ENCODE measurements at regions of chr14 and their contacts with region 1.

Region 1: GRCh38 chr14:79809849-79810612 is 401.3 kb downstream of the DIO2 start:
- DNase-seq: peak; percentile 4 to 38
- H3K4me3 ChIP-seq: no peak overlapping the region
- H3K27ac ChIP-seq: no peak overlapping the region
- H3K4me1 ChIP-seq: no peaks in the 10 kb centered on the region
- H3K27me3 ChIP-seq: no peaks in the 10 kb centered on the region
- CTCF ChIP-seq: peak; percentile 54

Region 2: GRCh38 chr14:78933948-78934524 is 876.0 kb before region 1 on chr14:
- CTCF ChIA-PET with region 1: no interaction called
- POLR2A ChIA-PET with region 1: no interaction called
- intact Hi-C with region 1: no loop called
- DNase-seq: peak in 1 of 2 experiments; percentile 8
- H3K4me3 ChIP-seq: no peak overlapping the region
- H3K27ac ChIP-seq: no peak overlapping the region
- H3K4me1 ChIP-seq: no peaks in the 10 kb centered on the region
- H3K27me3 ChIP-seq: no peaks in the 10 kb centered on the region
- CTCF ChIP-seq: peak; percentile 85

Region 3: GRCh38 chr14:79552778-79553177 is 257.3 kb before region 1 on chr14:
- CTCF ChIA-PET with region 1: no interaction called
- POLR2A ChIA-PET with region 1: no interaction called
- intact Hi-C with region 1: no loop called
- DNase-seq: no peak
- H3K4me3 ChIP-seq: no peak overlapping the region
- H3K27ac ChIP-seq: no peak overlapping the region
- H3K4me1 ChIP-seq: no peaks in the 10 kb centered on the region
- H3K27me3 ChIP-seq: peaks cover 20% of the 10 kb centered on the region
- CTCF ChIP-seq: no peak

Region 4: GRCh38 chr14:79881299-79881698 is 71.3 kb after region 1 on chr14:
- CTCF ChIA-PET with region 1: interaction called, 11 read pairs
- POLR2A ChIA-PET with region 1: no interaction called
- intact Hi-C with region 1: no loop called
- DNase-seq: no peak
- H3K4me3 ChIP-seq: no peak overlapping the region
- H3K27ac ChIP-seq: no peak overlapping the region
- H3K4me1 ChIP-seq: no peaks in the 10 kb centered on the region
- H3K27me3 ChIP-seq: peaks cover 16% of the 10 kb centered on the region
- CTCF ChIP-seq: no peak

Region 5: GRCh38 chr14:80850197-80850814 is 1040.3 kb after region 1 on chr14:
- CTCF ChIA-PET with region 1: no interaction called
- POLR2A ChIA-PET with region 1: no interaction called
- intact Hi-C with region 1: loop called (anchors 1 kb)
- DNase-seq: no peak
- H3K4me3 ChIP-seq: no peak overlapping the region
- H3K27ac ChIP-seq: no peak overlapping the region
- H3K4me1 ChIP-seq: peaks cover 7% of the 10 kb centered on the region; the same call in 1 of the 2 replicates
- H3K27me3 ChIP-seq: no peaks in the 10 kb centered on the region
- CTCF ChIP-seq: peak; percentile 94

Region 6: DNA sequence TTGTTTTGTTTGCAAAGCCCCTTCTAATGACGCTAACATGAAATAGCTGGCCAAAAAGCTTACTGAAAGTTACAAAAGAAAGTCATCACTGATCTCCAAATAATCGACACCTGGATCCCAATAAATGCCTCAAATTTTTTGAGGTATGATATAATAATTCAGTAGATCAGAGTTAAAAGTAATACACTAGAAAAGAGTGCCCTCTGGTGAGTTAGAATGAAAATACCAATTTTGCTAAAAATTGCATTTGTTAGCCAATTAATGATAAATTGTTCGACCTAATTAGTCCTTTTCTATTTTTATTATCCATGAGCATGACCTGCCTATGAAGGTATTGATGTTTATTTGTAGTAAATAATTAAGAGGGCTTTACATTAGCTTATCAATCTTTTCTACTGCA is 1053.0 kb after region 1 on chr14:
- CTCF ChIA-PET with region 1: no interaction called
- POLR2A ChIA-PET with region 1: no interaction called
- intact Hi-C with region 1: loop called (anchors 2 kb)
- DNase-seq: no peak
- H3K4me3 ChIP-seq: no peak overlapping the region
- H3K27ac ChIP-seq: no peak overlapping the region
- H3K4me1 ChIP-seq: no peaks in the 10 kb centered on the region
- H3K27me3 ChIP-seq: no peaks in the 10 kb centered on the region
- CTCF ChIP-seq: peak; percentile 70

Region 7: GRCh38 chr14:80987235-80988032 is 1177.4 kb after region 1 on chr14:
- CTCF ChIA-PET with region 1: no interaction called
- POLR2A ChIA-PET with region 1: no interaction called
- intact Hi-C with region 1: loop called (anchors 10 kb)
- DNase-seq: peak; percentile 69 to 72
- H3K4me3 ChIP-seq: peak overlapping the region; percentile 4; the same call in 1 of the 2 replicates
- H3K27ac ChIP-seq: no peak overlapping the region
- H3K4me1 ChIP-seq: peaks cover 7% of the 10 kb centered on the region; the same call in 1 of the 2 replicates
- H3K27me3 ChIP-seq: peaks cover 10% of the 10 kb centered on the region; the same call in 1 of the 2 replicates
- CTCF ChIP-seq: peak; percentile 98